ENCODE measurements at regions of chr14 and their contacts with region 1.

Region 1: DNA sequence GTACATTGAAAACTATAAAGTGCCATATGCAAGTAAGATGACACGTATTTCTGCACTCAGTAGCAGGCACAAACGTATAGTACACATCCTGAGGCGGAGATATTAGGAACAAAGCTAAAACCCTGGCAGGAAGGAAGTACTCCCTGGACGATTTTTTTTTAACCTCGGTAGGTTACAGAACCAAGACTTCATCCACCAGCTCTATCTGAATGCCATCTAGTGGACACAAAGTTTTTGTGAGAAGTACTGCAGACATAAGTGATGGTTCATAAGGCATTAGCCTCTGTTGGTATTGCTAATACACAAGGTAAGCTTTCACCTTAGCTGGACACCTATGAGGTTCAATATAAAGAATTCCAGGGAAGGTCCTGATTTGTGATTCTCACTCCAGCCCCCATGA is 83.0 kb upstream of the CCDC196 start:
- DNase-seq: no peak
- ATAC-seq: peak; percentile 91
- H3K4me3 ChIP-seq: no peak overlapping the region
- H3K27ac ChIP-seq: no peak overlapping the region
- H3K4me1 ChIP-seq: no peaks in the 10 kb centered on the region
- H3K27me3 ChIP-seq: no peaks in the 10 kb centered on the region
- CTCF ChIP-seq: peak; percentile 48 to 63 (median 51); a peak in 5 of 6 replicates
- EP300 ChIP-seq: no peak
- POLR2A ChIP-seq: no peak
- RAD21 ChIP-seq: peak; percentile 59

Region 2: GRCh38 chr14:66413901-66414300 is 10.7 kb after region 1 on chr14:
- CTCF ChIA-PET with region 1: interaction called, 14 read pairs
- POLR2A ChIA-PET with region 1: no interaction called
- RAD21 ChIA-PET with region 1: interaction called, 3 read pairs
- SMC1A ChIA-PET with region 1: interaction called, 3 read pairs
- in situ Hi-C with region 1: no loop called
- intact Hi-C with region 1: no loop called
- DNase-seq: no peak
- ATAC-seq: no peak
- H3K4me3 ChIP-seq: no peak overlapping the region
- H3K27ac ChIP-seq: no peak overlapping the region
- H3K4me1 ChIP-seq: no peaks in the 10 kb centered on the region
- H3K27me3 ChIP-seq: no peaks in the 10 kb centered on the region
- CTCF ChIP-seq: no peak
- EP300 ChIP-seq: no peak
- POLR2A ChIP-seq: no peak
- RAD21 ChIP-seq: no peak

Region 3: GRCh38 chr14:66421990-66422946 is 19.1 kb after region 1 on chr14:
- CTCF ChIA-PET with region 1: interaction called, 10 read pairs
- POLR2A ChIA-PET with region 1: no interaction called
- RAD21 ChIA-PET with region 1: no interaction called
- SMC1A ChIA-PET with region 1: interaction called, 3 read pairs
- in situ Hi-C with region 1: no loop called
- intact Hi-C with region 1: no loop called
- DNase-seq: no peak
- ATAC-seq: no peak
- H3K4me3 ChIP-seq: no peak overlapping the region
- H3K27ac ChIP-seq: no peak overlapping the region
- H3K4me1 ChIP-seq: no peaks in the 10 kb centered on the region
- H3K27me3 ChIP-seq: no peaks in the 10 kb centered on the region
- CTCF ChIP-seq: no peak
- EP300 ChIP-seq: no peak
- POLR2A ChIP-seq: no peak
- RAD21 ChIP-seq: no peak

Region 4: GRCh38 chr14:66476964-66477363 is 73.8 kb after region 1 on chr14:
- CTCF ChIA-PET with region 1: no interaction called
- POLR2A ChIA-PET with region 1: no interaction called
- RAD21 ChIA-PET with region 1: no interaction called
- SMC1A ChIA-PET with region 1: no interaction called
- in situ Hi-C with region 1: no loop called
- intact Hi-C with region 1: no loop called
- DNase-seq: no peak
- ATAC-seq: no peak
- H3K4me3 ChIP-seq: no peak overlapping the region
- H3K27ac ChIP-seq: no peak overlapping the region
- H3K4me1 ChIP-seq: no peaks in the 10 kb centered on the region
- H3K27me3 ChIP-seq: no peaks in the 10 kb centered on the region
- CTCF ChIP-seq: no peak
- EP300 ChIP-seq: no peak
- POLR2A ChIP-seq: no peak
- RAD21 ChIP-seq: no peak

Region 5: GRCh38 chr14:66833816-66834215 is 430.6 kb after region 1 on chr14:
- CTCF ChIA-PET with region 1: no interaction called
- POLR2A ChIA-PET with region 1: no interaction called
- RAD21 ChIA-PET with region 1: no interaction called
- SMC1A ChIA-PET with region 1: no interaction called
- in situ Hi-C with region 1: no loop called
- intact Hi-C with region 1: no loop called
- DNase-seq: no peak
- ATAC-seq: no peak
- H3K4me3 ChIP-seq: no peak overlapping the region
- H3K27ac ChIP-seq: no peak overlapping the region
- H3K4me1 ChIP-seq: no peaks in the 10 kb centered on the region
- H3K27me3 ChIP-seq: no peaks in the 10 kb centered on the region
- CTCF ChIP-seq: no peak
- EP300 ChIP-seq: no peak
- POLR2A ChIP-seq: no peak
- RAD21 ChIP-seq: no peak